Right ventricle myocardium superior (tissue), 1 donor: ENCODE measurements at regions of chr1 and their contacts with region 1.

Region 1: DNA sequence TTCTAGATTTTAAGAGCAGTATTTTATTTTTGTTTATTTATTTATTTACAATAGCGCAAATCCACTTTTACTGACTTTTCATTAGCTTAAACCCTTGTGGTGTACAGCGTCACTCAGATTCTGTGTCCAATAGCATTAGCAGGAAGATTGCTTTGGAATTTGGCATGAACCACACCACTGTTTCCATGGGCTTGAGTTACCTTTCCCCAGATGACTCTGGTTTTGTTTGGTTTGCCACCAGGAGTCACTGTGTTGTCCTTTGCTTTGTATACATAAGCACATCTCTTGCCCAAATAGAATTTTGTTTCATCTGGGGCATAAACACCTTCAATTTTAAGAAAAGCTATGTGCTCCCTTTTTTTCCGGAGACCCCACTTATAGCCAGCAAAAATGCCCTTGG is 25.9 kb upstream of the SNRPE start:
- DNase-seq: no peak
- ATAC-seq: no peak

Region 2: GRCh38 chr1:203813581-203814341 is 21.7 kb before region 1 on chr1:
- intact Hi-C with region 1: loop called (anchors 2 kb)
- DNase-seq: no peak
- ATAC-seq: no peak

Region 3: GRCh38 chr1:204059970-204060369 is 224.5 kb after region 1 on chr1:
- intact Hi-C with region 1: no loop called
- DNase-seq: no peak
- ATAC-seq: no peak